Activated T-helper 2 cell treated with anti-CD3 and anti-CD28 coated beads, Interferon-gamma antibody, Interleukin-2, Interleukin-4, amounts not matched to agents 10 μg/mL and 5 μg/mL and 100 μg/mL, durations not matched to agents 14 hours and 24 hours and 36 hours (primary cell): ENCODE measurements at regions of chr10 and their contacts with region 1.

Region 1: DNA sequence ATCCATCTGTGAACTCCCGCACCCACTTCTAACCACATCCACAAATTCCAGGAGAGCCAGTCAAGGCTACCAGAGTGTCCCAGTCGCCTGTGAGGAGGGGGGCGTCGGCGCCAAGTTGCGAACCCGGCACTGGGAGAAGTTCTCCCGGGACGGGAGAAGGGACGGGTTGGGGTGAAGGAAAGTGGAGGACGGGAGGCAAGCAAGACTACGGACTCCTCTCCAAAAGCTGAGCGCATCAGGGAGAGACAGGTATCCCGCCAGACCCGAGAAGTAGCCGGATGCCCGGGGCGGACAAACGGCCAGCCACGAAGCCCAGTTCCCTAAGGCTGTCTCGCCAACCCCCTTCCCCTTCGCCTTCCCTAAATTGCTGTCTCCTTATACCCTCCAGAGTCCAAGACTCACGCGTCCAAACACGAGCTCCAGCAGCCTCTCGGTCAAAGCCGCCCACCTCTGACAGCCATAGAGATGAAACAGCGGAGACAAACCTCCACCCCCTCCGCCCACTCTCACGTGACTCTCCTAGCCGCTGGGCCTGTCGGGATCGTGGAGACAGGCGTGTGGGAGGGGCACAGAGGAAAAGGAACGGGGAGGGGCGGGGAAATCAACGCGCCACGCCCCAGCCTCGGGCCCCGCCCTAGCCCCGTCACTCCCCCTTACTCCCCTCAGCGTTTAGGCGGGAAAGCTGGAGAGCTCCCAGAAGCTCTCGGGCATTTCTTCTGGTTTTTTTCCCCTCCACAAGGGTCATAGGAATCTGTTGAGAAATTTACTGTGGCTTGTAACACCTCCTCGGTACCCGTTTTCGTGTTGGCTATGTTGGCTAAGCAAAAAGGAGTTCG is at the start of gene MICU1:
- DNase-seq: peak; percentile 93
- H3K4me3 Mint-ChIP-seq: peak within 1 kb of the TSS; percentile 99
- H3K27ac Mint-ChIP-seq: peak within 1 kb of the TSS; percentile 93
- H3K4me1 Mint-ChIP-seq: peaks cover 14% of the 10 kb centered on the region
- H3K27me3 Mint-ChIP-seq: no peaks in the 10 kb centered on the region
- total RNA-seq, gene MICU1: 30.0 and 30.7 TPM in 2 replicates

Region 2: DNA sequence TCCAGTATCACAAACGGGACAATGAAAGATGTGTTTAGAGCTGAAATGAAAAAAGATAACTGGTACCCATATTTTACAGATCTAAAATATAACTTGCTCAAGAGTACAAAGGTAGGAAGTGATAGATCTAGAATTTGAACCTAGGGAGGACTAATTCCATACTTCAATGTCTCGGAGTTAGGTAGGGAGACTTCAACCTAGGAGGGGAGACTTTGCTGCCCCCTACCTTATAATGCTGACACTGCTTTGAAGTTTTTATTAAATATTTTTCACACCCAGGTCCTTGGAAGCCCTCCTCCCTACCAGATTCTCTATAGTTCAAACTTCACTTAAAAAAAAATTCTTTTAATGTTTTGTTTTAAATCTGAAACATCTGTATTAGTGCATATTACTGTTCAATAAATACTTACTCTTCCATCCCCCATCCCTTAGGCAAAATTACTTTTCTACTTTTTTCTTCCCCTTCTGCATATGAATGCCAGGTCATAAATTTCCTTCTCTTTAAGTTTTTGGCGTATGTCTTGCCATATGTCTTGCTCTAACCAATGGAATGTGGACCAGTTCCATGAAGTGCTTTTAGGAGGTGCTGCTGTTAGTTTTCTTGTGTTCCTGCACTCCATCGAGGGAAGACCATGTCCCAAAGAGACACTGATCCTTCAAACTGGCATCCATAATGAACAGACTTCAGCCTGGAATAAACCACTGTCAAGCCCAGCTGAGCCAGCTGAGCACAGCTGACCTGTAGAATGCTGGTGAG is 57.8 kb before region 1 on chr10:
- intact Hi-C with region 1: loop called (anchors 1 kb)
- DNase-seq: no peak
- H3K4me3 Mint-ChIP-seq: no peak overlapping the region
- H3K27ac Mint-ChIP-seq: no peak overlapping the region
- H3K4me1 Mint-ChIP-seq: peaks cover 16% of the 10 kb centered on the region
- H3K27me3 Mint-ChIP-seq: no peaks in the 10 kb centered on the region

Region 3: DNA sequence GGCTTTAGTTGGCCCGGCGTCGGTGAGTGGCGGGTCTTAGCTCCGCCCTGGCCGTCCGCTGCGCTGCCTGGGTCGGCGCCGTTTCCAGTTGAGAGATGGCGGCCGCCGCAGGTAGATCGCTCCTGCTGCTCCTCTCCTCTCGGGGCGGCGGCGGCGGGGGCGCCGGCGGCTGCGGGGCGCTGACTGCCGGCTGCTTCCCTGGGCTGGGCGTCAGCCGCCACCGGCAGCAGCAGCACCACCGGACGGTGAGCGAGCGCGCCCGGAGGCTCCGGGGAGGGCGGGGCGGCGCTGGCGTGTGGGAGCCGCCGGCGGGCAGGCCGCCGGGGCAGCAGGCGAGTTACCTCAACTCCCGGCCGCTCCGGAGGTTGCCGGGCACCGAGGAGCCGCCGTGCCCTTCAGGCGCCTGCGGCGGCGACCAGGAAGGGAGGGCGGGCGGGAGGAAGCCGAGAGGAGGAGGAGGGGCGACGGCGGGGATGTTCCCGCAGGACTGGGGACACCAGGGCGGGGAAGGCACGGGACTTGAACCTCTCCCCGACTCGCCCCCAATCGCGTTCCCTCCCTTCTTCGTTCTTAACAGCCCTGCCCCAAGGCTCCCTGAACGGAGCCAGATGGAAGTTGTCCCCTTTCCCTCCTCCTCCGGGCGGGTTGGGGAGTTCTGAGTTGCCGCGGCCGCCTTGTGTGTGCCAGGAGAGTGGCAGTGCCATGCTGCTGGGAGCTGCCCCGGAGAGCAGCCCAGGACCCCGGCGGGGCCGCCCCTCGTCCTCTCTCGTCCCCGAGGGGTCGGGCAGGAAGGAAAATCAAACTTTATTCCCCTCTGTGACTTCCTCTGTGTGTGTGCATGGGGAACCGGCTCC is 66.5 kb after region 1 on chr10 and contains the start of gene MCU:
- intact Hi-C with region 1: loop called (anchors 2 kb)
- DNase-seq: peak; percentile 88
- H3K4me3 Mint-ChIP-seq: peak within 1 kb of the TSS; percentile 84
- H3K27ac Mint-ChIP-seq: peak within 1 kb of the TSS; percentile 1
- H3K4me1 Mint-ChIP-seq: peaks cover 27% of the 10 kb centered on the region
- H3K27me3 Mint-ChIP-seq: peaks cover 5% of the 10 kb centered on the region
- total RNA-seq, gene MCU: 11.6 and 13.2 TPM in 2 replicates